AG04449 (cell line): ENCODE measurements at regions of chr14 and their contacts with region 1.

Region 1: GRCh38 chr14:94001501-94002396 is 4.6 kb downstream of the CCDC197 start:
- DNase-seq: no peak
- H3K4me3 ChIP-seq: no peak overlapping the region
- CTCF ChIP-seq: peak; percentile 97

Region 2: GRCh38 chr14:93959239-93960107 is 42.3 kb before region 1 on chr14:
- CTCF ChIA-PET with region 1: interaction called, 21 read pairs
- POLR2A ChIA-PET with region 1: no interaction called
- DNase-seq: peak; percentile 67
- H3K4me3 ChIP-seq: no peak overlapping the region
- CTCF ChIP-seq: no peak

Region 3: DNA sequence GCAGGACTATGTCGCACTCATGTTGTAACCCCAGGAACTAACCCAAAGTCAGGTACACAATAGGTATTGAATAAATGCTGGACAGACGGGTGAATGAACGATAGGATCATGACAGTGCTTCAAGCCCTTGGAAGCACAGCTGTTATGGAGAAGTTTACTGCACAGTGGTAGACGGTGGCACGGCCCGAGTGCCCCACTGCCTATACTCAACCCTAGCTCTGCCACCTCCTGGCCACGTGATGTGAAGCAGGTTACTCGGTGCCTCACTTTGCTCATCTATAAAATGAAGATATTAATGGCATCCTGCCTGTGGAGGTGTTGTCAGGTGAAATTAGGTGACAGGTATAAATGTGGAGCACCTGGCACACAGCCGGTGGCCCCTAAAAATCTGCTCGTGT is 31.2 kb before region 1 on chr14:
- CTCF ChIA-PET with region 1: interaction called, 11 read pairs
- POLR2A ChIA-PET with region 1: no interaction called
- DNase-seq: no peak
- H3K4me3 ChIP-seq: no peak overlapping the region
- CTCF ChIP-seq: peak; percentile 24

Region 4: GRCh38 chr14:94015223-94015622 is 13.5 kb after region 1 on chr14:
- CTCF ChIA-PET with region 1: interaction called, 18 read pairs
- POLR2A ChIA-PET with region 1: no interaction called
- DNase-seq: no peak
- H3K4me3 ChIP-seq: no peak overlapping the region
- CTCF ChIP-seq: no peak

Region 5: GRCh38 chr14:94175011-94175745 is 173.4 kb after region 1 on chr14:
- CTCF ChIA-PET with region 1: no interaction called
- POLR2A ChIA-PET with region 1: no interaction called
- DNase-seq: no peak
- H3K4me3 ChIP-seq: peak overlapping the region; percentile 59
- CTCF ChIP-seq: no peak